ENCODE measurements at regions of chr1 and their contacts with region 1.

Region 1: DNA sequence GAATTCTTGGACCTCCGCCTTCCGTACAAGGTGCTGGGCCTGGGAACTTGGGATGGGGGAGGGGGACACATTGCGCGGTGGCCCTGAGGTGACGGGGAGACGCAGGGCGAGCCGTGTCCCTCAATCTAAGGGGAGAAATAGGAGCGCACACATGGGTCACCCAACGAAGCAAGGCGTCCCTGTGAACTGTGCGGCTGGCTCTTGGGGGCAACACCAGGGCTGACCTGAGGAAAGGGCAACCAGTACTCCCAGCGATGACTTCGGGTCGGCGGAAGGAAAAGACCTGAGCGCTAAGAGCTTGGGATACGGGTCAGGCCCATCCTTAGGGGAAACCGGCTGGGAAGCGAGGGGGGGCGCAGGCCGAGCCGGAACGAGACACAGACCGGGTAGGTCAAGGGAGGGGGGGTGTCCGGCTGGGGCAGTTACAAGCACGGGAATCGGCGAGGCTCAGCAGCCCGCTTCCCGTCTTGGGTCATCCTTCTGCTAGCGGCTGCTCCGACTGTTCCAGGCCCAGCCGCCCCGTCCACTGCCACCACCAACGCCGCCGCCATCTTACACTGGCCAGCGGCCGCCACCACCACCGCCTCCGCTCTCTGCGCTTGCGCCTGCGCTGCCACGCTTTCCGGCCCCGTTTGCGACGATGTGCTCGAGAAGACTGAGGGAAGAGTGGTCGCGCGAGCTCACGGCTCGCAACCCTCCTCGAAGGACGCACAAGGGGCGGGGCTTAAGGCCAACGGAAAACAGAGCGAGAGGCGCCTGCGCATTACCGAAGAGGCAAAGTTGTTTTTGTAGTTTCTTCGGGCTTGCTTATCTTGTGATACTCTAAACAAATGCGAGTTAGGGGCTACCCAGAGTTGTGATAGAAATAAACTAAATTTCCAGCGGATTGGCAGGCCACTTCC is at the start of gene DCAF8:
- DNase-seq: peak; percentile 99
- ATAC-seq: peak; percentile 98 to 99 (median 98)
- H3K4me3 ChIP-seq: peak within 1 kb of the TSS; percentile 65 to 100 (median 78)
- H3K27ac ChIP-seq: peak within 1 kb of the TSS; percentile 89 to 99 (median 97)
- H3K4me1 ChIP-seq: peaks cover 0 to 51% (median 45%) of the 10 kb centered on the region in 9 donors
- H3K27me3 ChIP-seq: no peaks in the 10 kb centered on the region
- CTCF ChIP-seq: no peak
- total RNA-seq, gene DCAF8: 122 to 171 (median 154) TPM

Region 2: GRCh38 chr1:160205242-160206035 is 56.7 kb before region 1 on chr1 and contains the start of gene PEA15:
- intact Hi-C with region 1: loop called in 1 of 10 experiments (anchors 5 kb)
- DNase-seq: peak; percentile 84 to 85
- ATAC-seq: peak; percentile 74 to 91 (median 86)
- H3K4me3 ChIP-seq: peak within 1 kb of the TSS; percentile 75 to 98 (median 90)
- H3K27ac ChIP-seq: peak within 1 kb of the TSS; percentile 73 to 98 (median 96)
- H3K4me1 ChIP-seq: peaks cover 41 to 61% (median 54%) of the 10 kb centered on the region in 9 donors
- H3K27me3 ChIP-seq: no peaks in the 10 kb centered on the region
- CTCF ChIP-seq: no peak
- total RNA-seq, gene PEA15: 213 to 451 (median 271) TPM